Activated CD8-positive, alpha-beta T cell treated with anti-CD3 and anti-CD28 coated beads for 36 hours (primary cell): ENCODE measurements at regions of chr12 and their contacts with region 1.

Region 1: DNA sequence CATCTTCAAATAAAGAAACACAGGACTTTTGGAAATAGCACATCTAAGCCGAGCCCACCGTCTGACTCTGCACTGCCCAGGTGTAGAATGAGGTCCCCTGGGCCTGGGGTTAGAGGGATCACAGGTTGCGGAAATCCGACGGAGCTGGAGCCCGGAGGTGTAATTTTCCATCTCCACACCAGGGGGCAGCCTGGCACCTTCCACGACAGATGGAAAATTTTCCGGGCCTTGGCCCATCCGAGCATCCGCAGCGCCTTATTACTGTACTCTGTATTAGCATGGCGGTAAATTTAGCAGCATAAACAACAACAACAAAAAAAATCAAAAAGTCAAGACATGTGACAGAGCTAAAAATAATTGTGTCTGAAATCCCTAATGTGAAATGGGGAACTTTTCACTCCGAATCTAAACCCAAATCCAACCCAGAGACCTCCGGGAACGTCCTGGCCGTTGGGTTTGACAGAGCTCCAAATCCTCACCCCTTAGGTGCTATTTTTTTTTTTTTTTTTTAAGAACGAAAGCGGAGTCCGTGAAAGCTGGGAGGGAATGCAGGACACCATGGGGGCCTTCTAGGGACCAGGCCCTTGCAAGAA is 93.9 kb downstream of the KSR2 start:
- DNase-seq: peak; percentile 74
- ATAC-seq: peak; percentile 89
- H3K4me3 Mint-ChIP-seq: no peak overlapping the region
- H3K27ac Mint-ChIP-seq: no peak overlapping the region
- H3K4me1 Mint-ChIP-seq: peaks cover 8% of the 10 kb centered on the region
- H3K27me3 Mint-ChIP-seq: peaks cover 15% of the 10 kb centered on the region
- CTCF ChIP-seq: peak; percentile 89

Region 2: DNA sequence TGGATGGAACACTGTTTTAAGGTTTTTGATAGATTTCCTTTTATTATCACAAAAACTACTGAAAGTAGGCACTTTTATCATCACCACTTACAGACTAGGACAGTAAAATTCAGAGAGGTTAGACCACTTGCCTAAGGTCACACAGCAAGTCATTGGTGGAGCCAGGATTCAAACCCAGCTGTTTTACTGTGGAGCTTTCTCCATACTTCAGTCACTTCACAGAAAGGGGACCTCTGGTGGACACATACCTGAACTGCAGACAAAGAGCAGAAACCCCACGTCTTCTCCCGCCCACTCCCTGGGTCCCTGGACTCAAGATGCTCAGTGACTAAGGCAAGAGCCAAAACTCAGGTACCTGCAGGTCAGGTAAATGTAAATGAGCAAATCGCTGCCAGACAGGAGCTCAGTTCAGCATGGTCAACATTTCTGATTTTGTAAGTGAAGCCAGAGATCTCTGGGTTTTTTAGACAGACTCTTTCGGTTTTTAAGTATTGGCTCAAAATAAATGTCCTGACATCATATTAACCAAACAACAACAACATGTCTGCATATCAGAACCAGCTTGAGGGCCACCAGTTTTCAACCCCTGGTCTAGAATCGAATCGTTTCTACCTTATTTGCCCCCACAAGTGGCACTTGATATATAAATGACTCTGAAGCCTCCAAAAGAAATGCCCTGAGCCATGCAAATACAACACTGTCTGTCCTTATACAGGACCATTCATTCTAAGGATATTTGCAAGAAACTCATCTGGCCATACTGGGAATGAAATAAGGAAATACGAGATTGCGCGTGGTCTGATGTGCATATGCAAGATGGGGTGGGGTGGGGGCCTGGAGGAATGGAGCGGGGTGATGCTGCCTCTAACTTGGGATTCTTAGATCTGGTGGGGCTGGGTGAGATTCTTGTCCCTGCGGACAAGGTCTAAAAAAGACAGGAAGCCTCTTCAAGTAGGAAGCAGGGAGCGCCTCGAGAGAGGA is 17.0 kb before region 1 on chr12:
- CTCF ChIA-PET with region 1: interaction called, 14 read pairs
- POLR2A ChIA-PET with region 1: no interaction called
- intact Hi-C with region 1: no loop called
- DNase-seq: peak; percentile 78
- ATAC-seq: peak; percentile 84
- H3K4me3 Mint-ChIP-seq: no peak overlapping the region
- H3K27ac Mint-ChIP-seq: no peak overlapping the region
- H3K4me1 Mint-ChIP-seq: no peaks in the 10 kb centered on the region
- H3K27me3 Mint-ChIP-seq: peaks cover 3% of the 10 kb centered on the region
- CTCF ChIP-seq: peak; percentile 57

Region 3: DNA sequence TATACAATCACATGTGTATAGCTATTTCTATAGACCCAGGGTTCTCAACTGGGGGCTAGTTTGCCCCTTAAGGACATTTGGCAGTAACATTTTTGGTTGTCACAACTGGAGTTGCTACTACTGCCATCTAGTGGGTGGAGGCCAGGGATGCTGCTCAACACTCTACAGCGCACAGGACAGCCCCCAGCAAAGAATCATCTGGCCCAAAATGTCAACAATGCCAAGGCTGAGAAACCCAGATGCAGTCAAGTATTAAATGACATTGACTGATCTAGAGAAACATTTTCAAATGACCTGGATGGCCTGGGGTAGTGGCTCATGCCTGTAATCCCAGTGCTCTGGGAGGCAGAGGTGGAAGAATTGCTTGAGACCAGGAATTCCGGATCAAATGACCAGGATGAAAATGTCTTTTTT is 180.2 kb after region 1 on chr12:
- CTCF ChIA-PET with region 1: interaction called, 8 read pairs
- POLR2A ChIA-PET with region 1: no interaction called
- intact Hi-C with region 1: loop called (anchors 10 kb)
- DNase-seq: peak; percentile 90
- ATAC-seq: peak; percentile 90
- H3K4me3 Mint-ChIP-seq: no peak overlapping the region
- H3K27ac Mint-ChIP-seq: peak overlapping the region; percentile 50
- H3K4me1 Mint-ChIP-seq: peaks cover 48% of the 10 kb centered on the region
- H3K27me3 Mint-ChIP-seq: no peaks in the 10 kb centered on the region
- CTCF ChIP-seq: peak; percentile 76

Region 4: DNA sequence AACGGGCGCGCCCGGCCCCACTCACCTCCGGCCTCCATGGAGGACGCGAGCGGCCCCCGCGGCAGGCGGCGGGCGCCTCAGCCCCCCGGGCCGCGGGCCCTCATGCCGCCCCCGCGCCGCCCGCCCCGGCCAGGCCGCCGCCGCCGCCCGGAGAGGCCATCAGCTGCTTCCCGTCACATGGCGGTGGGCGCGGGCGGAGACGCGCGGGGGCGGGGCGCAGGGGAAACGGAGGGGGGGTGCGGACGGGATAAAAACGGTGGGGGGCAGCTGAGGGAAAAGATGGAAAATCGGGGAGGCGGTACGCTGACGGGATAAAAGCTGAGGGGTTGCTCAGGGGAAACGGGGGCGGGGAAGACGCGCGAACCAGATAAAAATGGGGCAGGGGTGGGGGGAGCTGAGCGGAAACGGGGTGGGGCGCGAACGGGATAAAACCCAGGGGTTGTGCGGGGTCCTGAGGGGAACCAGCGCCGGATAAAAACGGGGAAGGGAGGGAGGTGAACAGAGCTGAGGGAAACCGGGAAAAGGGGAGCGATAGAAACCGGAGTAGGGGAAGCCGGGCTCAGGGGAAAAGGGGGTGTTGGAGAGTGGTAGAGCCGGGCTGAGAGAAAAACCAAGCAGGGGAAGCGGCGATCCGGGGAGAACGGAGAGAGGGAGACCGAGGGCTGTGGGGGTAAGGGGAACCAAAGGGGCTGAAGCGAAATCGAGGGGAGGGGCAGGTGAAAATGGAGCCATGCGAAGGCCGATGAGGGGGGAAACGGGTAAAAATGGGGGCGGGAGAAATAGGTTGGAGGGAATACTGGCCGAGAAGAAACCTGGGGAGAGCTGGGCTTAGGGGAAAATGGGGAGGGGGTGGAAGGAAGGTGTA is 186.3 kb after region 1 on chr12 and contains the start of gene WSB2:
- CTCF ChIA-PET with region 1: interaction called, 10 read pairs
- POLR2A ChIA-PET with region 1: interaction called, 3 read pairs
- intact Hi-C with region 1: loop called (anchors 10 kb)
- DNase-seq: peak; percentile 63
- ATAC-seq: peak; percentile 31
- H3K4me3 Mint-ChIP-seq: peak within 1 kb of the TSS; percentile 85
- H3K27ac Mint-ChIP-seq: peak within 1 kb of the TSS; percentile 96
- H3K4me1 Mint-ChIP-seq: peaks cover 49% of the 10 kb centered on the region
- H3K27me3 Mint-ChIP-seq: no peaks in the 10 kb centered on the region
- CTCF ChIP-seq: no peak
- total RNA-seq, gene WSB2: 26.2 to 27.9 TPM

Region 5: DNA sequence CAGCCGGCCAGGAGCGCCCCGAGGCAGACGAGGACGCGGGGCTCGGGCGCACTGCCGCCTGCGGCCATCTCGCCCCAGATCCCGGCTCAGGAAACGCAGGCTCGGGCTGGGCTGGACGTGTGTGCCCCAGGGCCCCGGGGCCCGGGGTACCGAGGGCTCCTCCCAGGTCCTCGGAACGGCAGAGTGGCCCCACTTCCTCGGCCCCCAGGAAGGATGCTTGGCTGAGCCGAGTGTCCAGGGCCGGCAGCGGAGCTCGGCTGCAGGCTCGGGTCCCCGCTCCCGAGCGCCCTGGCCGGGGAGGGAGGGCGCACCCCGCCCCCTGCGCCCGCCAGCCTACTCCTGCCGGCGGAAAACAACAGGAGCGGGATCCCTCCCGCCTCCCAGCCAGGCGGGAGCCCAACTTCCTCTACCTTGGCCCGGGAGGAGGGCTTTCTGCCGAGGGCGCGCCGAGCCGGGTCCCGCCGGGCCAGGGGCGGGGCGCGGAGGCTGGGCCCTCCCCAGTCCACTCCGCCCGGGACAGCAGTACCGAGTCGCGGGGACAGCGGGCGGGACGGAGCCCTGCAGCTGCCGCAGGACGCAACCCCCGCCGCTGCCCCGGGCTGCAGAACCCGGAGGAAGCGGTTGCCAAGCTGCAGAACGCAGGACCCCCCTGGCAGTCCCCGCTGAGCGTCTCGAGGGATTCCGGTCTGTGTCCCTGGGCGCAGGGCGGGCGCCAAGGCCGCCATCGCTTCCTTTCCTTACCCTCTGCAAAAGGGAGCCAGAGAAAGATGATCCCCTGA is 228.9 kb after region 1 on chr12 and contains the start of gene VSIG10:
- CTCF ChIA-PET with region 1: no interaction called
- POLR2A ChIA-PET with region 1: no interaction called
- intact Hi-C with region 1: loop called (anchors 10 kb)
- DNase-seq: peak; percentile 24
- ATAC-seq: peak; percentile 60
- H3K4me3 Mint-ChIP-seq: peak within 1 kb of the TSS; percentile 73
- H3K27ac Mint-ChIP-seq: no peak within 1 kb of the TSS
- H3K4me1 Mint-ChIP-seq: peaks cover 7% of the 10 kb centered on the region
- H3K27me3 Mint-ChIP-seq: peaks cover 15% of the 10 kb centered on the region
- CTCF ChIP-seq: no peak
- total RNA-seq, gene VSIG10: 4.2 to 5.3 TPM

Region 6: DNA sequence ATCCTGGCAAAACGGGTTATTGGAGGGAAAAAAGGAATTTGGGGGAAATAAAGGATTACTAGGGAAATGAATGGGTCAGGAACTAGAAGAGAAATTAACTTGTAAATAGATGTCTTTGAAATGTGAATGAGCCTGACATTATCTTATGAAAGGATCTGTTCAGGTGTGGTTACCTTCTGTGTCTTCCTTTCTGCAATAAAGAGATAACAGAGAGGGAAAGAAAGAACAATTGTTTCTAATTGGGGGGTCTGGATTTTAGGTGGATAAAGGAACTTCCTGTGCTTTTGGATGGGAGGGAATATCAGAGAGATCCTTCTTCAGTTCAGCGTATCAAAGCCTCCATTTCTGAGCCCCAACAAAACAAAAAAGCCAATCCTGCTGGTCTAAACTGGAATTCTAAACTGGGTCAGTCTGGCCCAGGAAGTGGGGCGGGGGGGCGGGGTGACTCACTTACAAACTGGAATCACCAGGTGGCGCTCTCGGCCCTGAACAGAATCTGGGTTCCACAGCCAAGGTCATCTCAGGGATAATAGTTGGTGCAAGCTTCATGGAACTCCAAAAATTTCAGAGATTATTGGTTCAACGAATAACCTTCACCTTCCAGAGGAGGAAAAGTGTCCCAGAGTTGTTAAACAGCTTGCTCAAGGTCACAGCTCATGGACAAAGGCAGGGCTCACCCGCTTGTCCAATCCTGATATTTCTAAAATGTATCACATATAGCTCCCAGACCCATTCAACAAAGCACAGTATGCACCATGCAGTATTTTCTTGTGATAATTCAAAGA is 245.8 kb after region 1 on chr12:
- CTCF ChIA-PET with region 1: interaction called, 17 read pairs
- POLR2A ChIA-PET with region 1: interaction called, 3 read pairs
- intact Hi-C with region 1: no loop called
- DNase-seq: peak; percentile 79
- ATAC-seq: peak; percentile 66
- H3K4me3 Mint-ChIP-seq: no peak overlapping the region
- H3K27ac Mint-ChIP-seq: peak overlapping the region; percentile 79
- H3K4me1 Mint-ChIP-seq: peaks cover 8% of the 10 kb centered on the region
- H3K27me3 Mint-ChIP-seq: no peaks in the 10 kb centered on the region
- CTCF ChIP-seq: peak; percentile 93